ENCODE measurements at regions of chr21 and their contacts with region 1.

Region 1: GRCh38 chr21:28745131-28746016 is 247.3 kb downstream of the LTN1 start:
- DNase-seq: peak; percentile 47 to 94 (median 76)

Region 2: DNA sequence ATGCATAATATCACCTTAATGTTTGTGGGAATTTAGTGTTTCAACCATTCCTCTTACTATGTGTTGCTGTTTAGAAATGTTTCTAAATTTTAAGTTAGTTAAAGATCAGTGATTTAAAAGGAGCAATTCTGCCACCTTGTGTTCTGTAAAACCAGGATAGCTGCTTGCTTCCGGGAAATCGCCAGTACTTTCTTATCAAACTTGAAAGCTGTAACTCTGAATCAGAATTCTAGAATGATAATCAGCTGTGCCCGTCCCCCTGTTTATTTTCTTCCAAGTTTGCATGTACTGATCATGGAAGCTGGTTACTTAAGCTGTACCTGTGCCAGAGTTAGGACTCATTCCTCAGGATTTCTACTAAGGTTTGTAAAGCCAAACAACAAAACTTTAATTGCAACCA is 409.1 kb before region 1 on chr21:
- intact Hi-C with region 1: loop called (anchors 5 kb)
- DNase-seq: no peak

Region 3: DNA sequence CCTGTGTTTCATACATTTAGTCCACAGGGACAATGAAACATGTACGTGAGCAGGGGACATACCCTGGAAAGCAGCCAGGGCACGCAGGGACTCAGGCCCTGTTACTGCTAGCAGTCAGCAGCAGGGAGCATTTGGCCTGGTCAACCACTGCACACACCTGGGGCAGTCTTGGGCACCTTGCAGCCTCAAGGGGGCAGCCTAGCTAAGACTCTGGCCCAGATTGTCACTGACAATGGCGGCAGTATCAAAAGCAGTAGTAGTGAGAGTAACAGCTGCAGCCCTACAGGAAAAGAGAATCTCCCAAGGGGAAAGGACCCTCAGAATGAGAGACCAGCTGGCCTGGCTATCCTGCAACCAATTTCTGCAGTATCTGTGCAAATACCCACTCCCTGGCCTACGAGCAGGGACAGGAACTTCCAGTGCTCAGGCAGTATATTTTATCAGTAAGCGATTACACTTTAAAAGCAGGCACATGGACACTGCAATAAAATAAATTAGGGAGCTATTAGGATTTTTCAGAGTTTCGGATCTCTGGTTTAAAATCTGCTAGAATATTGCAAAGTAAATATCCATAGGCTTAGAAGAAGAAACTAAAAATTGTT is 228.3 kb before region 1 on chr21:
- intact Hi-C with region 1: loop called (anchors 1 kb)
- DNase-seq: peak in 8 of 10 donors; percentile 8 to 82 (median 44)

Region 4: DNA sequence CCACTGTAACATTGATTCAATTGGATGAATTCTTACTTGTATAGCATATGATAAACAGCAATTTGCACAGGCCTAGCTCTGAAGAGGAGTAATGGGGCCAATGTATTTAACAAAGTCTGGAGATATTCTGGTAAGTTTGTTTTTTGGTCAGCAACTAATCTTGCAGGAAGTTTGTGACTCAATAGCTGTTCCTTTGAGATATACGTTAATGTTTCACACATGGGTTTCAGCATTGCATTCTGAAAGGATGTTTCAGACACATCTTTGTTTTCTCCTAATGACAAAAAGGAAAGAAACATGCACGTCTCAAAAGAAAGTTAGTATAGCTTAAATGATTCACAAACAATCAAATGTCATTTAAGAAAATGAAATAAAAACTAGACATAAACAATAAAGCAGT is 198.3 kb after region 1 on chr21:
- intact Hi-C with region 1: loop called (anchors 2 kb)
- DNase-seq: no peak

Measured in posterior cingulate gyrus (tissue), 11 donors.